ENCODE measurements at regions of chr12 and their contacts with region 1.

Region 1: GRCh38 chr12:123468562-123469185 is 10.7 kb downstream of the SNRNP35 start:
- DNase-seq: no peak
- ATAC-seq: no peak

Region 2: DNA sequence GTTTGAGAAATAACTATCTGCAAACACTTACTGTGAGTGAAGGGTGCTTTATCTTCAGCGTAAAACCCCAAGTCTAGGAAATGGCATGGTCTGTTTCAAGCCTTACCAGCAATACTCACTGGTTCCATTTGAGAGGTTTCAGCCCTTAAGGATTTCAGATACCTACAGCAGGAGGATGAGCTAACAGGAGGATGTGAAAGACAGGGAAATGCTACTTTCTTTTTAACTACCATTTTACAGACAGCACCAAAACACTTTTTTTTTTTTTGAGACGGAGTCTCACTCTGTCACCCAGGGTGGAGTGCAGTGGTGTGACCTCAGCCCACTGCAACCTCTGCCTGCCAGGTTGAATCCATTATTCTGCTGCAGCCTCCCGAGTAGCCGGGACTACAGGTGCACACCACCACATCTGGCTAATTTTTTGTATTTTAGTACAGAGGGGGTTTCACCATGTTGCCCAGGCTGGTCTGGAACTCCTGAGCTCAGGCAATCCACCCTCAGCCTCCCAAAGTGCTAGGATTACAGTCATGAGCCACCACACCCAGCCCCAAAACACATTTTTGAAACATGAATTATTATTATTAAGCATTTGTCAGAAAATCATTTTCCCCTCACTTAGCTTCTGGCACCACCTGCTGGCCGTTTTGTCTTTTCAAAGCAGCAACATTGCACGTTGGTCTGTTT is 230.9 kb before region 1 on chr12:
- intact Hi-C with region 1: no loop called
- DNase-seq: peak; percentile 64
- ATAC-seq: no peak

Region 3: DNA sequence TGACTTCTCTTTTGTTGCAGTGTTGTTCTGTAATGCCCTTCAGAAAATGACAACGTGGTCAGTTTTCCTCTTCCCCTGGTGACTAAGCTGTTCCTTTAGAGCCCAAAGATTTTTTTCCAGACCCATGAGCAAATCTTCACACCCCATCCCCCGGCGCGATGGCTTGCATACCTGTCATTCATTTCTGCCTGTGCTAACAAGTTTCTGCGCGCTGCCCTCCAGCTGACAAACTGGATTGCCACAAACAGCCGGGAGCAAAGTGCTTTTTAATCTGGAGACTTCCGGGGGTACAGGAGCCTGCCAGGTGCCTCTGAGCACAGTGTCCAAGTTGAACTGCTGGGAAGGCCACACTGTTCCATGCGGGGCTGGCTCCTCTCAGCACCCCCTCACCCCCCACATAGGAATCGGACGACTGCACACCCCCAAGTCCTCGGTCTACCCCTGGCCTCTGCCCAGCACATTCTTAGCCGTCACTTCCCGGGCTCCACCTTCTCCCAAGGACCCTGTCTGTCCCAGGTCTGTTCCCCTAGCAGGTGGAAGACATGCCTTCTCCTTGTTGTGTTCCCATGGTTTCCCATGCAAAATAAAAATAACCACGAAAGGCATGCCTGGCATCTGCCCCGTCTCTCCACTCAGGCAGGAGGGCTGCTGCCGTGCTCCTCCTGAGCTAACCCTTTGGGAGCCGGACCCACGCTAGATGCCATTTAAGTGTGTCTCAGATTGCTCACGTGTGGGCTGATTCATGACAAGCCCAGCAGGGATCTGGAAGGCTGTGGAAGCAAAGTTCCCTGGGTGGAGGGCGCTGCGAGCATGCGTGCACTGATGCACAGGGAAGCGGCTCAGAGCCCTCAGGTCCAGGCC is 50.7 kb after region 1 on chr12:
- intact Hi-C with region 1: loop called in 1 of 2 experiments (anchors 5 kb)
- DNase-seq: peak; percentile 78
- ATAC-seq: peak; percentile 77 to 79

Region 4: DNA sequence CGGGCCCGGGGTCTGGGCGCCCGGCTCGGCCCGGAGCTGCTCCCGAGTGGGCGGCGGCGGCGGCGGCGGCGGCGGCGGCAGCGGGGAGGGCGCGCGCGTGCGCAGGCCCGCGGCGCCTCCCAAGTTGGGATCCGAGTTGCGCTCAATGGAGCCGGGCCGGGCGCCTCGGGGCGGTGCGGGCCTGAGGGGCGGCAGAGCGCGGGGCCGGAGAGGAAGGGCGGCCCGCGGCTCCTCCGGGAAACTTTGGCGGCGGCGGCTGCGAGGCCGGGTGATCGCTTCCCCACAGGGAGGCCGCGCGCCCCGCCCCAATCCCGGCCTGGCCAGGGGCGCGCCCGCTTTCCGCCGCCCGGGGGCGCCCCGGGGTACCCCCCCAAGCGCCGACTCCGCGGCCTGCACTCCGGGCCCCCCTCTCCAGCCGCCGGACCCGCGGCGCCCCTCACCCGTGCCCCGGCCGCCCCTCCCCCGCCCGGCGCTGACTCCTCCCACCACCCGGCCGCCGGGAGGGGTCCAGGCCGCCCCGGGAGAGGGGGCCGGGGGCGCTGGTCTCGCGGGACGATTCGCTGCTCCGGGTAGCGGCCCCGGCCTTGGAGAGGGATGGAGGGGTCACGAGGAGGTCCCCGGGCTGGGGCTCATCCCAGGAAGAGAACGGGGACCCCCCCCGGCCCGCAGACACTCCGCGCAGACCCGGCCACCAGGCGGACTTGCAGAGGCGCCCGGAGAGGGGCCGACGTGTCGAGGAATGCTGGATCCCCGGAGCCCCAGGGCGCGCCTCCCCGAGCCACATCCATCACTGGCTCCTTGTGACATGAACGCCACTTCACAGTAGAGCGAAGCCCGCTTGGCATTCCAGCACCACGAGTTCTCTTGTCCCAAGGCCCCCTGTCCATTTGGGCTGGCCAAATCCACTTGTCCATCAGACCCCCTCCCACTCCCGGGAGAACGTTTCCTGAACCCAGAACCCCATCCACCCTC is 65.3 kb after region 1 on chr12 and contains the start of gene RILPL1:
- intact Hi-C with region 1: loop called in 1 of 2 experiments (anchors 5 kb)
- DNase-seq: peak; percentile 68
- ATAC-seq: peak; percentile 74 to 85
- total RNA-seq, gene RILPL1: 91.7 to 98.0 TPM

Measured in left cardiac atrium (tissue), 4 donors.